ENCODE measurements at regions of chr19 and their contacts with region 1.

Region 1: GRCh38 chr19:38389560-38390281 is 1.2 kb downstream of the SPRED3 start:
- DNase-seq: peak in 1 of 5 donors; percentile 67
- H3K4me3 ChIP-seq: no peak overlapping the region
- H3K27ac ChIP-seq: no peak overlapping the region
- H3K4me1 ChIP-seq: peaks cover 0 to 4% (median 0%) of the 10 kb centered on the region in 3 donors
- H3K27me3 ChIP-seq: peaks cover 9% of the 10 kb centered on the region
- CTCF ChIP-seq: no peak

Region 2: DNA sequence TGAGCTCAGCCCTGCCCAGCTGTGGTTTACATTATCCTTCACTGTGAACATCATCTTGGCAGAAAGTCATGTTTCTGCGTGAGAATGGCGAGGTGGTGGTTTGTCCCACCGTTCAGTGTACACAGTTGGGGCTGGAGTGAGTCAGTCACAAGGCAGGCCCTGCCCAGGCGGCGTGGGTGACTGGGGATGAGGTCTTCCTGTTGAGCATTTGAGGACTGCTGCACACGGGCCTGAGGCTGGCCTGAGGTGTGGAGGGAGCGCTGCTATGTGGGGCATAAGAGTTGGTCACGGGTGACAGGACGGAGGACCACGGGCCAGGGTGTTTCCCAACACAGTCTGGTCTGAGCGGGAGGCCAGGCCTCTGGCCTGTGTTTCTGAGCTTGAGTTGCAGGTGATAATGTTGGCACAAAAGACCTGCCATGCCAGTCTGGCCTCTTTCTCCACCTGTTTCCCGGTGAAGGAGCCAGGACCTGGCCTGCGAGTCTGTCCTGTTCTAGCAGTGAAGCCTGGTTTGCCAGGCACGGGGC is 99.0 kb before region 1 on chr19:
- intact Hi-C with region 1: no loop called
- DNase-seq: peak in 1 of 5 donors; percentile 94
- H3K4me3 ChIP-seq: no peak overlapping the region
- H3K27ac ChIP-seq: peak overlapping the region in 1 of 2 donors; percentile 11
- H3K4me1 ChIP-seq: no peaks in the 10 kb centered on the region
- H3K27me3 ChIP-seq: no peaks in the 10 kb centered on the region
- CTCF ChIP-seq: no peak

Region 3: GRCh38 chr19:38619361-38620174 is 229.8 kb after region 1 on chr19:
- intact Hi-C with region 1: loop called (anchors 10 kb)
- DNase-seq: no peak
- H3K4me3 ChIP-seq: peak overlapping the region; percentile 97 to 100 (median 98)
- H3K27ac ChIP-seq: peak overlapping the region; percentile 82 to 88
- H3K4me1 ChIP-seq: peaks cover 2 to 18% (median 10%) of the 10 kb centered on the region in 3 donors
- H3K27me3 ChIP-seq: no peaks in the 10 kb centered on the region
- CTCF ChIP-seq: no peak

Measured in kidney (tissue), 22 donors.